Left ventricle myocardium inferior (tissue), 1 donor: ENCODE measurements at regions of chr17 and their contacts with region 1.

Region 1: GRCh38 chr17:80866147-80866793 is 125.4 kb upstream of the CHMP6 start:
- DNase-seq: peak; percentile 59
- H3K4me3 ChIP-seq: no peak overlapping the region
- H3K27ac ChIP-seq: no peak overlapping the region
- H3K4me1 ChIP-seq: peaks cover 5% of the 10 kb centered on the region
- H3K27me3 ChIP-seq: no peaks in the 10 kb centered on the region
- CTCF ChIP-seq: peak; percentile 86

Region 2: GRCh38 chr17:80720610-80721577 is 145.4 kb before region 1 on chr17:
- intact Hi-C with region 1: no loop called
- DNase-seq: no peak
- H3K4me3 ChIP-seq: no peak overlapping the region
- H3K27ac ChIP-seq: no peak overlapping the region
- H3K4me1 ChIP-seq: peaks cover 11% of the 10 kb centered on the region
- H3K27me3 ChIP-seq: no peaks in the 10 kb centered on the region
- CTCF ChIP-seq: no peak

Region 3: GRCh38 chr17:80970044-80970761 is 103.9 kb after region 1 on chr17:
- intact Hi-C with region 1: loop called (anchors 10 kb)
- DNase-seq: peak; percentile 55
- H3K4me3 ChIP-seq: no peak overlapping the region
- H3K27ac ChIP-seq: no peak overlapping the region
- H3K4me1 ChIP-seq: peaks cover 23% of the 10 kb centered on the region
- H3K27me3 ChIP-seq: peaks cover 33% of the 10 kb centered on the region
- CTCF ChIP-seq: peak; percentile 70